ENCODE measurements at regions of chr2 and their contacts with region 1.

Region 1: DNA sequence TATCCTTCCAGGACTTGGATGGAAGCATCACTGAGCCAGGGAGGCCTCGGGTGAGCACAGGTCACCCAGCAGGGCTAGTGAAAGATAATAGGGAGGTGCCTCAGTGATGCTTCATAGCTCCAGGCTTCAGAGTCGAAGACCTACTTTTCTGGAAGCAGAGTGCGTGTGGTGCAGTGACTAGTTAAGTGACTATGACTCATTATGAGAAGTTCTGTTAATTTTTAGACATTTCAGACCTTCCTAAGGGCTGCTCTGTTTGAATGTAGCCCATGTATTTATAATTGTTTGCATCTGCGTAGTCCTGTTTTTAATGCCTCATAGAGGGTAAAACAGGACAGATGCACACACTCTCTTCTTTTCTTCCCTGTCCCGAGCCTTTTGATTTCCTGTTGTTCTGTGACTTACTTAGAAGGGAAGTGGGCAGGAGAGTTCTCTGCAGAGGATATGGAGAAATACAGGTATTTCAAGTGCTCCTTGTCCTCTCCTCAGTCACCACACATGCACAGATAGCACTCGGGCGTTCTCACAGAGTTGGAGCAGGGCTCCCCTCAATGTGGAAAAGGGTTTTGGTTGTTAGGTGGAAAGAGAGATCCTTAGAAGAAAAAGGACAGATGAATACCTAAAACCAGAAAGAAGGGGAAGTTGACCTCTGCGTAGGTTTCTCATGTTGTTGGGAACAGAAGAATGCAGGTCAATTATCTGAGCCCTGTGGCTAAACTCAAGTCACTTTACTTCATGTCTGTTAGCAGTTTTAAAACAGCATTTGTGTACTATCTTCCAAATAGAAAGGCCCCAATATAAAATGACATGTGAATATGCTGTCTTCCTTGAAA is 34.7 kb downstream of the RALB start:
- DNase-seq: peak; percentile 66
- H3K4me3 Mint-ChIP-seq: peak overlapping the region; percentile 12
- H3K27ac Mint-ChIP-seq: peak overlapping the region; percentile 78
- H3K4me1 Mint-ChIP-seq: peaks cover 27% of the 10 kb centered on the region
- H3K27me3 Mint-ChIP-seq: no peaks in the 10 kb centered on the region

Region 2: GRCh38 chr2:120206022-120206581 is 81.3 kb before region 1 on chr2:
- CTCF ChIA-PET with region 1: no interaction called
- POLR2A ChIA-PET with region 1: no interaction called
- intact Hi-C with region 1: no loop called
- DNase-seq: peak; percentile 66
- H3K4me3 Mint-ChIP-seq: no peak overlapping the region
- H3K27ac Mint-ChIP-seq: no peak overlapping the region
- H3K4me1 Mint-ChIP-seq: no peaks in the 10 kb centered on the region
- H3K27me3 Mint-ChIP-seq: no peaks in the 10 kb centered on the region

Region 3: DNA sequence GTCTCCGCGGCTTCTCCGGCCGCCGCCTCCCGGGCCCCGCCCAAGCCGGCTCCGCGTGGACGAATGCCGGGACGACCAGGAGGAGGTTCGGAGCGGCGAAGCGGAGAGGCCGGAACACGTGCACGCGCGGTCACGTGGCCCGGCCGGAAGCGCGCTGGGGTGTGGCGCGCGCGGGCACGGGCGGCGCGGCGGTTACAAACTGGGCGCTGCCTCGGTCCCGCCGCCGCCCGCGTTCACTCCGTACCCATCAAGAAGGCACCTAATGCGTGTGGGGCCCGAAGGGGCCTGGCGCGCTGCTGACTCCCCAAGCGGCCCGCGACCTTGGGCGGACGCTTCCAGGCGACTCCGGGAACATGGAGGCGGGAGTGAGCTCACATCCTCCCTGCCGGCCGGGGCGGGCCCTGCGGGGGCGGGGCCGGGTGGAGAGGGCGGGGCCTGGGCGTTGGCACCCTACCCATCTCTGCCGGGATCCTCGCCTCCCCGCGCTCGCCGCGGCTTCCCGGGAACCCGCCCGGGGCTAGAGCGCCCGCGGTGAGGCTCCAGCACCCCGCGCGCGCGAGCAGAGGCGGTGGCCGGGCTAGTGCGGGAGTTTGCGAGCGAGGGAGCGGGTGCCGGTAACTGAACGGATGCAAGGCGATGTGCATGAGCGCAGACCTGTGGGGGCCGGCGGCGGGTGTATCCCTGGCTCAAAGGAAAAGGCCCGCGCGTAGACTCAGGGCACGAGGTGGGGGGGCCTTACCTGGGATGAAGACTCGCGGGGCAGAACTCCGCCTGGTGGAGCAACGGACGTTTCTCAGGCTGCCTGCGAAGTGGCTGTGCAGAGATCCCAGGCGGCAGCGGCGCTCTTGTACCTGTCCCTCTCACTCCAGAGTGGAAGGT is 64.1 kb before region 1 on chr2 and contains the start of gene TMEM185B:
- CTCF ChIA-PET with region 1: no interaction called
- POLR2A ChIA-PET with region 1: interaction called, 3 read pairs
- intact Hi-C with region 1: loop called (anchors 2 kb)
- DNase-seq: peak; percentile 95
- H3K4me3 Mint-ChIP-seq: peak within 1 kb of the TSS; percentile 81
- H3K27ac Mint-ChIP-seq: peak within 1 kb of the TSS; percentile 83
- H3K4me1 Mint-ChIP-seq: peaks cover 52% of the 10 kb centered on the region
- H3K27me3 Mint-ChIP-seq: no peaks in the 10 kb centered on the region
- total RNA-seq, gene TMEM185B: 19.4 to 19.7 TPM

Region 4: DNA sequence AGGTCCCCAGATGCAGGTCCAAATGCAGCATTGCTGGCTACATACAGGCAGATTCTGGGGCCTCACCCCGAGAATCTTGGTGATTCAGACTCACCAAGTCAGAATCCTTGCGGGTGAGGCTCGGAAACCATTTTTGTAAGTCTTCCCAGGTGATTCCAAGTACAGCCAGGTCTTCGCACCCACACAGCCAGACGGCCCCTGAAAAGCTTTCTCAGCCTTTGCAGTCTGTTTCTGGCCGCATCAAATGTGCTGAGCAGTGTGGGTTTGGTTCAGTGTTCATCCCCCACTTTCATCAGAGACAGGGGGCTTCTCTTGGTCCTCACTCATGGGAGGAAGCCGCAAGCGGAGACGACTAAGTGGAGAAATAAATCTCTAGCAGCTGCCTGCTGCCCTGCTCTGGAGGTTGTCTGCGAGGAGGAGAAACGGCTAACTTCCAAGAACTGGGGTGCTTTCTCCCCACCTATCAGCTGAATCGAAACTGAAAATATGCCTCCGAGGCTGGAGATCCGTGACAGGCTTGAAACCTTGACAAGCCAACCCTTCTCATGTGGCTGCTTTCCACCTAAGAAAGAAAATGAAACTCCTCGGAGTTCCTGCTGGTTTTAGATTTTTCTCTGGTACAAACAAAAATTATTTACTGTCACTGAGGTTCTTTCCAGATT is 55.3 kb before region 1 on chr2:
- CTCF ChIA-PET with region 1: no interaction called
- POLR2A ChIA-PET with region 1: interaction called, 7 read pairs
- intact Hi-C with region 1: loop called (anchors 1 kb)
- DNase-seq: peak; percentile 85
- H3K4me3 Mint-ChIP-seq: peak overlapping the region; percentile 82
- H3K27ac Mint-ChIP-seq: peak overlapping the region; percentile 96
- H3K4me1 Mint-ChIP-seq: peaks cover 40% of the 10 kb centered on the region
- H3K27me3 Mint-ChIP-seq: no peaks in the 10 kb centered on the region

Region 5: DNA sequence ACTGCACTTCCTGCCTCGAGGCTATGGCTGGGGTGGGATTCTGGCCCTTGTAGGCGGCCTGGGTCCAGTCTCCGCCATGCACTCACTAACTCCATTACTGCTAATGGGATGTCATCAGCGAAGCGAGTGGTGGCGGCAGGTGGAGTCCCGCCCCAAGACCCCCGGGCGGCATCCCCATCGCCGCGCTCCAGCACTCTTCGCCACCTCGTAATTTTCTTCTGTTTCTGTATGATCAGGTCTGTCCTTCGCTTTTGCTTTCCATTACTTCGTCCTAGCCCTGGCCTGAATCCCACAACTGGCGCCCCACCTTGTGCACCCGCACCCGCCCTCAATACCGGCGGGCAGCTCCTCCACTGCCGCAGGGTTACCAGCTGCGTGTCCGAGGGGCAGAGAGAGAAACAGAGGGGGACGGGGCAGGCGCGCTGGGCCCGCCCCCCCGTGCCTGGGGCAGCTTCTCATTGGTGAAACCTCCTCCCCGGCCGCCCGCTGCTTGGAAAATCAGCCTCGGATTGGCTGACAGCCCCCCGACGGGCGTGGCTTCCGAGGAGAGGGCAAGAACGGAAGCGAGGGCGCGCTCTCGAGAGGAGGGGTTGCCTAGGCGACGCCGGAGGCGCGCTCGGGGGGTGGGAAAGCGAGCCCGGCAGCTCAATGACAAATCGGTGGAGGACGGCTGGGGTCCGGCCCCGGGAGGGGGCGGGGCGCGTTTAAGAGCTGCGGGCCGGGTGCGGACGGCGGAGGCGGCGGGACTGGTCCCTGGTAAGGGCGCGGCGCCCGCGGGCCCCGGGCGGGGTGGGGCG is 35.0 kb before region 1 on chr2 and contains the start of gene RALB:
- CTCF ChIA-PET with region 1: interaction called, 3 read pairs
- POLR2A ChIA-PET with region 1: interaction called, 3 read pairs
- intact Hi-C with region 1: loop called (anchors 1 kb)
- DNase-seq: peak; percentile 99
- H3K4me3 Mint-ChIP-seq: peak within 1 kb of the TSS; percentile 98
- H3K27ac Mint-ChIP-seq: peak within 1 kb of the TSS; percentile 83
- H3K4me1 Mint-ChIP-seq: peaks cover 43% of the 10 kb centered on the region
- H3K27me3 Mint-ChIP-seq: peaks cover 7% of the 10 kb centered on the region
- total RNA-seq, gene RALB: 52.5 to 52.9 TPM

Region 6: DNA sequence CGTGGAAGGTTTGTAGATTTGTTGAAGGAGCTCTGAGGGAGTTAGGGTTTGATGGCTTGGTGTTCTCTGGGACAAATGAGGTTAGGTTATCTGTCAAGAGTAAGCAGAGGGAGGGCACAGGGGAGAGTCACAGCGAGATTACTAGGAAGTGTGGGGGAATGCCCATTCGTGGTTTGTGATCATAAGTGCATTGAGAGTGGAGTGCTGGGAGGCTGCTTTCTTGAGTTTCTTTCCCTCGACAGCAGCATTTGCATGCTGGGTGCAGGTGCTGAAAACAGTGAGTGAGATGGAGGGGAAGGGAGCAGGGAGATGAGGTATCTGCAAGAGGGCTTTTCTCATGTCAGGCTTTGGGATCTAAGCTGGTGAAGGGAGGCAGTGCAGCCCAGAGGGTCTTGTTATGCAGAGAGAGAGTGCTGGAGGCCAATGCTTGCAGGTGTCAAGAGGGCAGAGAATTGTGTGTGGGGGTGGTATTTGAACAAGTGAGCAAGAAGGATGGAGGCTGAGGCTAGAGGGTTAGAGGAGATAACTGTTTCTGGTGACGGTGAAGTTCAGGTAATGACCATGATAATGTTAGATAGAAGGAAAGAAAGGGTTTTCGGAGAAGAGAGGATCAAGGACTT is 25.9 kb before region 1 on chr2:
- CTCF ChIA-PET with region 1: interaction called, 3 read pairs
- POLR2A ChIA-PET with region 1: no interaction called
- intact Hi-C with region 1: loop called (anchors 1 kb)
- DNase-seq: peak; percentile 82
- H3K4me3 Mint-ChIP-seq: no peak overlapping the region
- H3K27ac Mint-ChIP-seq: no peak overlapping the region
- H3K4me1 Mint-ChIP-seq: peaks cover 28% of the 10 kb centered on the region
- H3K27me3 Mint-ChIP-seq: no peaks in the 10 kb centered on the region

Region 7: DNA sequence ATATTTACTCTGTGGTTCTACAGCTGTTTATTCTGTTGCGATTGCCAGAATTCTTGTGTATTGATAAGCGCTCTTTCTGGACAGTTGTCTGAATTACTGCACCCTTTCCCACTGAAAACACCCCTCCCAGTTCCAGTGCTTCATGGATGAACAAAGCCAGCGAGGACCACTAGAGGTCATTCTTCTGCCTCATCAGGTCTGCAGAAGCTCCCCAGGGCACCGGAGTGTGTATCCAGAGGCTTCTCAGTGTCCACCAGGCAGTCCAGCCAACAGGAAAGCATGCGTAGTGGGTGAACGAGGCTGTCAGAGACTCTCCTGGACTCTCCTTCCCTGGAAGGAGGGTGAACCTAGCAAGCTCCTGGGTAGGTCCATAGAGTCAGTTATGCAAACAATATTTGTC is 17.9 kb after region 1 on chr2:
- CTCF ChIA-PET with region 1: no interaction called
- POLR2A ChIA-PET with region 1: no interaction called
- intact Hi-C with region 1: no loop called
- DNase-seq: no peak
- H3K4me3 Mint-ChIP-seq: no peak overlapping the region
- H3K27ac Mint-ChIP-seq: no peak overlapping the region
- H3K4me1 Mint-ChIP-seq: no peaks in the 10 kb centered on the region
- H3K27me3 Mint-ChIP-seq: no peaks in the 10 kb centered on the region